Activated CD4-positive, alpha-beta T cell treated with anti-CD3 and anti-CD28 coated beads for 36 hours (primary cell): ENCODE measurements at regions of chr20 and their contacts with region 1.

Region 1: DNA sequence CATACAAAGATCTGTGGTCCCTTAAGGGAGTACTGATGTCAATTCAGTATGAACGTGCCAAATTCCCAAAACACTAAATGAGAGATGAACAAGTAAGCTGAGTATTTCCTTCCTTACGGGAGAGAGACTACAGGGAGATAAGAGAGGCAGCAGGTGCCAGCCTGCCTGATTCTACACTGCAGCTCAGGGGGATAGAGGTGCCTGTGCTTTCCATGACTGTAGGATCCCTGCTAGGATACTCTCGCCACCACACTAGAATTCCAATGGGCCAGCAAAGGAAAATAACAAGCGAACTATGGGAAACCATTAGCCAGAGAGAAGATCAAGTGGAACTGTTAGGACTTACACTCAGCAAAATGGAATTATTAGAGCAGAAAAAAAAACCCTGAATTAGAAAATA is 198.5 kb upstream of the BTBD3 start:
- DNase-seq: no peak
- ATAC-seq: no peak
- H3K4me3 Mint-ChIP-seq: no peak overlapping the region
- H3K27ac Mint-ChIP-seq: no peak overlapping the region
- H3K4me1 Mint-ChIP-seq: no peaks in the 10 kb centered on the region
- H3K27me3 Mint-ChIP-seq: no peaks in the 10 kb centered on the region

Region 2: GRCh38 chr20:11229772-11230171 is 489.4 kb before region 1 on chr20:
- CTCF ChIA-PET with region 1: no interaction called
- POLR2A ChIA-PET with region 1: no interaction called
- intact Hi-C with region 1: no loop called
- DNase-seq: no peak
- ATAC-seq: no peak
- H3K4me3 Mint-ChIP-seq: no peak overlapping the region
- H3K27ac Mint-ChIP-seq: no peak overlapping the region
- H3K4me1 Mint-ChIP-seq: no peaks in the 10 kb centered on the region
- H3K27me3 Mint-ChIP-seq: no peaks in the 10 kb centered on the region

Region 3: GRCh38 chr20:11766976-11767375 is 47.8 kb after region 1 on chr20:
- CTCF ChIA-PET with region 1: no interaction called
- POLR2A ChIA-PET with region 1: no interaction called
- intact Hi-C with region 1: no loop called
- DNase-seq: no peak
- ATAC-seq: no peak
- H3K4me3 Mint-ChIP-seq: no peak overlapping the region
- H3K27ac Mint-ChIP-seq: no peak overlapping the region
- H3K4me1 Mint-ChIP-seq: no peaks in the 10 kb centered on the region
- H3K27me3 Mint-ChIP-seq: no peaks in the 10 kb centered on the region

Region 4: GRCh38 chr20:11826334-11826733 is 107.2 kb after region 1 on chr20:
- CTCF ChIA-PET with region 1: no interaction called
- POLR2A ChIA-PET with region 1: interaction called, 10 read pairs
- intact Hi-C with region 1: no loop called
- DNase-seq: no peak
- ATAC-seq: no peak
- H3K4me3 Mint-ChIP-seq: no peak overlapping the region
- H3K27ac Mint-ChIP-seq: no peak overlapping the region
- H3K4me1 Mint-ChIP-seq: no peaks in the 10 kb centered on the region
- H3K27me3 Mint-ChIP-seq: no peaks in the 10 kb centered on the region

Region 5: GRCh38 chr20:11965602-11966001 is 246.4 kb after region 1 on chr20:
- CTCF ChIA-PET with region 1: no interaction called
- POLR2A ChIA-PET with region 1: no interaction called
- intact Hi-C with region 1: no loop called
- DNase-seq: no peak
- ATAC-seq: no peak
- H3K4me3 Mint-ChIP-seq: no peak overlapping the region
- H3K27ac Mint-ChIP-seq: no peak overlapping the region
- H3K4me1 Mint-ChIP-seq: no peaks in the 10 kb centered on the region
- H3K27me3 Mint-ChIP-seq: peaks cover 2% of the 10 kb centered on the region